Activated T-helper 1 cell treated with anti-CD3 and anti-CD28 coated beads, Interleukin-12 subunit alpha, Interleukin-12 subunit beta, Interleukin-2, Interleukin-4 antibody, amounts not matched to agents 30 ng/mL and 10 ng/mL and 1 ng/mL, durations not matched to agents 14 hours and 24 hours and 36 hours (primary cell): ENCODE measurements at regions of chr3 and their contacts with region 1.

Region 1: GRCh38 chr3:43345877-43346276 is 59.5 kb downstream of the SNRK start:
- DNase-seq: no peak
- H3K4me3 Mint-ChIP-seq: peak overlapping the region; percentile 63
- H3K27ac Mint-ChIP-seq: peak overlapping the region; percentile 86
- H3K4me1 Mint-ChIP-seq: peaks cover 80% of the 10 kb centered on the region
- H3K27me3 Mint-ChIP-seq: no peaks in the 10 kb centered on the region

Region 2: DNA sequence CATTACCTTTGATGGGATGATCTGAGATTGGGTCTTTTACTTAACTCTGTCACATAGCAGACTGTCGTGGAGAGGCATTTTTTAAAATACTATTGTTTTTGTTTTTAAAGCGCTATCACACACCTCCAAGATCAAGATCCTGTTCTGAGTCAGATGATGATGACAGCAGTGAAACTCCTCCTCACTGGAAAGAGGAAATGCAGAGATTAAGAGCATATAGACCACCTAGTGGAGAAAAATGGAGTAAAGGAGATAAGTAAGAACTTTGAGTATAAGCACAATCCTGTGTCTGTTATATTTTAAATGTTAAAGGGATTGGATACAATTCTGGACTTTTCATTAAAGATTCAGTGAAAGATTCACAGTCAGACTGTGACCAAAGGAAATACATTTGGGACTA is 710.8 kb before region 1 on chr3:
- intact Hi-C with region 1: no loop called
- DNase-seq: no peak
- H3K4me3 Mint-ChIP-seq: peak overlapping the region; percentile 30
- H3K27ac Mint-ChIP-seq: peak overlapping the region; percentile 67
- H3K4me1 Mint-ChIP-seq: peaks cover 20% of the 10 kb centered on the region
- H3K27me3 Mint-ChIP-seq: no peaks in the 10 kb centered on the region

Region 3: GRCh38 chr3:43296565-43296964 is 49.3 kb before region 1 on chr3:
- intact Hi-C with region 1: loop called (anchors 1 kb)
- DNase-seq: peak; percentile 63
- H3K4me3 Mint-ChIP-seq: peak overlapping the region; percentile 80
- H3K27ac Mint-ChIP-seq: peak overlapping the region; percentile 87
- H3K4me1 Mint-ChIP-seq: peaks cover 82% of the 10 kb centered on the region
- H3K27me3 Mint-ChIP-seq: no peaks in the 10 kb centered on the region